Activated CD8-positive, alpha-beta memory T cell treated with anti-CD3 and anti-CD28 coated beads, Interleukin-2, amount 10 ng/mL, durations not matched to agents 7 days and 5 days (primary cell): ENCODE measurements at regions of chr4 and their contacts with region 1.

Region 1: GRCh38 chr4:42519803-42520417 is 122.6 kb downstream of the SHISA3 start:
- DNase-seq: peak; percentile 53
- ATAC-seq: peak; percentile 53
- H3K4me3 Mint-ChIP-seq: no peak overlapping the region
- H3K27ac Mint-ChIP-seq: no peak overlapping the region
- H3K4me1 Mint-ChIP-seq: no peaks in the 10 kb centered on the region
- H3K27me3 Mint-ChIP-seq: no peaks in the 10 kb centered on the region

Region 2: GRCh38 chr4:42282081-42282901 is 237.6 kb before region 1 on chr4:
- CTCF ChIA-PET with region 1: interaction called, 43 read pairs
- DNase-seq: peak; percentile 48
- ATAC-seq: peak; percentile 85
- H3K4me3 Mint-ChIP-seq: no peak overlapping the region
- H3K27ac Mint-ChIP-seq: no peak overlapping the region
- H3K4me1 Mint-ChIP-seq: peaks cover 15% of the 10 kb centered on the region
- H3K27me3 Mint-ChIP-seq: peaks cover 27% of the 10 kb centered on the region

Region 3: DNA sequence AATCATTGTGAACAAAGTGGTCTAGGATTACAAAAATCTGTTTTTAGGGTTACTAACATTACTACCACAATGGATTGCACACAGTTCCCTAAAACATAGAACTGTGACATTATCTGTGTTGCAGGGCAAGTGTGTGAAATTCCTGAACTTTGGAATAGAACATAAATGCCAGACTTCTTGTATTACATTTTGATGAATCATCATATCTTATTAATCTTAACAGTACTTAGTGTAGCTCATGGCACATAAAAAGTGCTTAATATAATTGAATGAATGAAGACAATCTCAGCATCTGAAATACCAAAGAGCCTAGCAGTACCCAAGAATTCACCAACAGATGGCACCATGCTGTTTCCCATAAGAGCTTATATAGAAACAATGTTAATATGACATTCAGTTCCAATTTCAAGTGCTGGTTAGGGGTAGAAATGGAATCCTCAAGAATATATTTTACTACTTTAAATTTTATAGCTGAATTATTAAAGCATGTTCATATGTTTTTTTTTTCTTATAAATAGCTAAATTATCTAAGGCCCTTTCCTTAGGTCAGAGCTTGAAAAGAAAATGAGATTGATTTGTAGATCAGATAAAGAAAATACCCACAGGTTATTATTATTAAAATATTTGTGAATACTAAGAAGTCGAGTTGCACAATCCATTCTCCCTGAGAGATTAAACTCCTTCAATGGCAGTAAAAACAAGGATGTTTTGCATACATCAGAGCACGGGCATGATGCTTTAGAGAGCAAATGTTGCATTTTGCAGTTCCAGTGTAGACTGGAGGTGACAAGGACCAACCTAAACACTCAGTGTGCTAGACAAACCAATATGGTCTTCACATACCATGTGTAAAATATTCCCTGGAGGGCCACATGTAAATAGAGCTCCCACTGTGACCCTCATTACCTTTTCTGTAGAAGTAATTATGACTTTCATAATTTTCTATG is 148.3 kb before region 1 on chr4:
- CTCF ChIA-PET with region 1: interaction called, 28 read pairs
- DNase-seq: no peak
- ATAC-seq: no peak
- H3K4me3 Mint-ChIP-seq: no peak overlapping the region
- H3K27ac Mint-ChIP-seq: no peak overlapping the region
- H3K4me1 Mint-ChIP-seq: no peaks in the 10 kb centered on the region
- H3K27me3 Mint-ChIP-seq: peaks cover 13% of the 10 kb centered on the region

Region 4: DNA sequence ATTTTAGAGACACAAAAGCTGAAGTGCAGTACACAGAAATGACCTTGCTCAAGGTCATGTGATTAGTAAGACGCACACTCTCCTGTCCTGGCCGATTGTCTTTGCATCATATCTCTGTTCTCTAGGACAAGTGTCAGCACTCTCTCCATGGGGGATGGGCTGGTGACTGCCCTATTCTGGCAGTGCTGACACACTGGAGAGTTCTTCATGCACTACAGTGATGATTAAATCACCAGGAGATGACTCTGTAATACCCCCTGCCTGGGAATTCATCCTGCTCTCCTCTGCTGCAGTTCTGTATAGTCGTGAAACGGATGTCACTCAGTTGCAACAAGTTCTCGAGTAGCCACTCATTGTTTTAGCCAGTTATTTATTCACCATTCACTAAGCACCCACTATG is 127.9 kb before region 1 on chr4:
- CTCF ChIA-PET with region 1: no interaction called
- DNase-seq: no peak
- ATAC-seq: no peak
- H3K4me3 Mint-ChIP-seq: no peak overlapping the region
- H3K27ac Mint-ChIP-seq: no peak overlapping the region
- H3K4me1 Mint-ChIP-seq: peaks cover 8% of the 10 kb centered on the region
- H3K27me3 Mint-ChIP-seq: peaks cover 33% of the 10 kb centered on the region

Region 5: DNA sequence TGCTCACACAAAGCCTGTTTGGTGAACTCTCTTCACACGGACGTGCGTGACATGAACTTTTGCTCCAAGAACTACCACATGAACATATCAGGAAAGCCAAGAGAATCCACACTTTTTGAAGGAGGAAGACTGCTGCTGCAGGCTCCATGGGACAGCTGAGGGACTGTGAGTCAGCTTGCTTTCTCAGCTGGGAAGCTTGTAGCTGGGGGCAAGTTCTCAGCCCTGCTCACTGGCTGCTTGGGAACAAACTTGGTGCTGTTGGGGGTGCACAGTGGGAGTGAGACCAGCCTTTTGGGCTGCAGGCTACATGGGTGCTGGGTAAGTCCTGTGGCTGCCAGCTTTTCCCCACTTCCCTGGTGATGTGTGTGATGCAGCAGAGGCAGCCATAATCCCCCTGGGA is 13.1 kb after region 1 on chr4:
- CTCF ChIA-PET with region 1: interaction called, 10 read pairs
- DNase-seq: no peak
- ATAC-seq: no peak
- H3K4me3 Mint-ChIP-seq: no peak overlapping the region
- H3K27ac Mint-ChIP-seq: no peak overlapping the region
- H3K4me1 Mint-ChIP-seq: peaks cover 3% of the 10 kb centered on the region
- H3K27me3 Mint-ChIP-seq: no peaks in the 10 kb centered on the region